Colonic mucosa (tissue), 4 donors: ENCODE measurements at regions of chr4 and their contacts with region 1.

Region 1: DNA sequence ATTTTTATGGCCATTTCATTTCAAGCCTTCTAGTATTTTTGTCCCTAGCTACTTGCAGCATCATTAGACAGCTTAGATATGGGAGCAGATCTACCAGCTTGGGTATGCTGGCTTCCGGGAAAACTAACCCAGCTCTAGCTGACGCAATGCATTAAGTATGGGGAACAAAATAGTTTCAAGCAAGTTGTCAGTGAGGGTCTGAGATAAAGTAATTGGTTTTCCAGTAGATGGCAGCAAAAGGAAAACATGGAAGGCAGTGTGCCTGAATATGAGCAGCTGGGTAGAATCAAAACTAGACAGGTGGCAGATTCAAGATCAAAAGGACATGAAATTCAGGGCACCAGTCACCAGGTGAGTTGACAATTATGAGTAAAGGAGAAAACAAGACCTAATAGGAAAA is 340.9 kb upstream of the CTSO start:
- DNase-seq: no peak
- H3K4me3 ChIP-seq: no peak overlapping the region
- H3K27ac ChIP-seq: no peak overlapping the region
- H3K4me1 ChIP-seq: no peaks in the 10 kb centered on the region
- H3K27me3 ChIP-seq: no peaks in the 10 kb centered on the region
- CTCF ChIP-seq: no peak

Region 2: GRCh38 chr4:156677131-156677531 is 382.6 kb after region 1 on chr4:
- intact Hi-C with region 1: loop called (anchors 10 kb)
- DNase-seq: peak; percentile 28
- H3K4me3 ChIP-seq: no peak overlapping the region
- H3K27ac ChIP-seq: no peak overlapping the region
- H3K4me1 ChIP-seq: no peaks in the 10 kb centered on the region
- H3K27me3 ChIP-seq: no peaks in the 10 kb centered on the region
- CTCF ChIP-seq: no peak